HCT116 (cell line): ENCODE measurements at regions of chr14 and their contacts with region 1.

Region 1: GRCh38 chr14:89973234-89973823 is 17.6 kb downstream of the TDP1 start:
- DNase-seq: peak; percentile 35
- ATAC-seq: peak; percentile 97
- H3K4me3 ChIP-seq: no peak overlapping the region
- H3K27ac ChIP-seq: no peak overlapping the region
- H3K4me1 ChIP-seq: no peaks in the 10 kb centered on the region
- H3K27me3 ChIP-seq: no peaks in the 10 kb centered on the region
- CTCF ChIP-seq: peak; percentile 65 to 86 (median 80)
- POLR2A ChIP-seq: no peak
- RAD21 ChIP-seq: peak; percentile 70

Region 2: DNA sequence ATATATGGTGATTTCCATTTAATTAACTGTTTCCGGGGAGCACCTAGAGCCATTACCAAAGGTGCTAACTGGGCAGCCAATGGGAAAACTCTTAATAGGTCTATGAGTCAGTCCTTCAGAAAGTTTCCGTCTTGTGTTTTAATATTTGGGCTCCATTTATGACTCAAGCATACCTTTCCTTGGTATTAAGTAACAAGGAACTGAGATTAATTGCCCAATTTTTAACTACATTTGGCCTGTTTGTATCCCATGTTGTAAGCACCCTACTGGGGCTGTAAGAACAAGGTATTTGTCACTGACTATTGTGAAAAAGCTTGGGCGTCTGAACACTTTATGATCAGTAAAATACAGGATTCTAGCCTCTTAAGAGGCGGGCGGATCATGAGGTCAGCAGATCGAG is 493.5 kb before region 1 on chr14:
- CTCF ChIA-PET with region 1: no interaction called
- POLR2A ChIA-PET with region 1: no interaction called
- RAD21 ChIA-PET with region 1: no interaction called
- intact Hi-C with region 1: no loop called
- DNase-seq: no peak
- ATAC-seq: no peak
- H3K4me3 ChIP-seq: no peak overlapping the region
- H3K27ac ChIP-seq: no peak overlapping the region
- H3K4me1 ChIP-seq: peaks cover 0 to 3% of the 10 kb centered on the region in 2 experiments; a peak in 1 of 4 replicates
- H3K27me3 ChIP-seq: no peaks in the 10 kb centered on the region
- CTCF ChIP-seq: no peak
- POLR2A ChIP-seq: no peak
- RAD21 ChIP-seq: no peak

Region 3: DNA sequence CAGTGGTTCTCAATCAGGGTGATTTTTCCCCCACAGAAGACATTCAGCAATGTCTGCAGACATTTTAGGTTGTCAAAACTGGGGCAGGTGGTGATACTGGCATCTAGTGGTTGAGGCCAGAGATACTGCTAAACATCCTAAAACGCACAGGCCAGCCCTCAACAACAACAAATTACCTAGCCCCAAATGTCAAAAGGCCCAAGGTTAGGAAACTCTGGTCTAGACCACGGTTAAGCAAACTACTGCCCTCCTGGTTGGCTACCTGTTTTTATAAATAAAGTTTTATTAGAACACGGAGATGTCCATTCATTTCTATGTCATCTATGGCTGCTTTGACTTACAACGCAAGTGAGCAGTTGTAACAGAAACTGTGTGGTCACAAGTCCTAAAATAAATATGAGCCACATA is 205.5 kb before region 1 on chr14:
- CTCF ChIA-PET with region 1: no interaction called
- POLR2A ChIA-PET with region 1: no interaction called
- RAD21 ChIA-PET with region 1: no interaction called
- intact Hi-C with region 1: no loop called
- DNase-seq: peak; percentile 43
- ATAC-seq: peak; percentile 92
- H3K4me3 ChIP-seq: no peak overlapping the region
- H3K27ac ChIP-seq: no peak overlapping the region
- H3K4me1 ChIP-seq: no peaks in the 10 kb centered on the region
- H3K27me3 ChIP-seq: peaks cover 9% of the 10 kb centered on the region; the same call in 1 of the 2 replicates
- CTCF ChIP-seq: peak; percentile 57 to 82 (median 75); a peak in 5 of 6 replicates
- POLR2A ChIP-seq: no peak
- RAD21 ChIP-seq: peak; percentile 87

Region 4: GRCh38 chr14:90060312-90060964 is 87.1 kb after region 1 on chr14:
- CTCF ChIA-PET with region 1: interaction called, 17 read pairs
- POLR2A ChIA-PET with region 1: no interaction called
- RAD21 ChIA-PET with region 1: no interaction called
- intact Hi-C with region 1: loop called (anchors 1 kb)
- DNase-seq: peak; percentile 59
- ATAC-seq: peak; percentile 96
- H3K4me3 ChIP-seq: peak overlapping the region; percentile 49 to 73
- H3K27ac ChIP-seq: peak overlapping the region; percentile 36
- H3K4me1 ChIP-seq: peaks cover 0 to 16% of the 10 kb centered on the region in 2 experiments; a peak in 2 of 4 replicates
- H3K27me3 ChIP-seq: no peaks in the 10 kb centered on the region
- CTCF ChIP-seq: peak; percentile 61 to 73 (median 62)
- POLR2A ChIP-seq: peak; percentile 43
- RAD21 ChIP-seq: peak; percentile 76